Cardiac septum (tissue), 1 donor: ENCODE measurements at regions of chr10 and their contacts with region 1.

Region 1: GRCh38 chr10:35195361-35196306 is 69.0 kb downstream of the CREM start:
- DNase-seq: peak; percentile 78

Region 2: GRCh38 chr10:35103882-35104281 is 91.8 kb before region 1 on chr10:
- intact Hi-C with region 1: no loop called
- DNase-seq: no peak

Region 3: DNA sequence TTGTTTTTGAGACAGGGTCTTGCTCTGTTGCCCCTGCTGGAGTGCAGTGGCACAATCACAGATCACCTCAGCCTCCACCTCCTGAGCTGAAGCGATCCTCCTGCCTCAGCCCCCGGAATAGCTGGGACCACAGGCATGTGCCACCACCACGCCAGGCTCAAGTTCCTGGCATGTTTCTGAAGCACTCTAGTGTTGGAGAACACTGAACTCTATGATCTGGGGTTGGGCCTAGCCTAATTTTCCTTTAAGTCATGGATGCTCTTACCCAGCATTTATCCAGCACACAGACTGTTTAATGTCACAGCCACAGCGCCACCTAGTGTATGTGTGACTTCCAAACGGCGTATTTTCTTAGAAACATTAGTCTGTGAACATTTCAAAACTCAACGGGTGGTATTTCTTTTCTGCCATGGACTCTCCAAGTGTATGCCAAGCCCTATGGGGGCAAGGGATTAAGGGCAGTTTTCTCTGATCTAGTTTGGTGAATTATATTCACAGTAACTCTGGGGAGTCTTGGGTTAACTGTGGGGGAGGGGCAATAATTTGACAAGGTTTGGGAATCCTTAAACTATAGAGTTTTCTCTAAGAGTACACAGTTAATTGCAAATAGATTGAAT is 22.8 kb after region 1 on chr10:
- intact Hi-C with region 1: loop called (anchors 2 kb)
- DNase-seq: peak; percentile 86

Region 4: DNA sequence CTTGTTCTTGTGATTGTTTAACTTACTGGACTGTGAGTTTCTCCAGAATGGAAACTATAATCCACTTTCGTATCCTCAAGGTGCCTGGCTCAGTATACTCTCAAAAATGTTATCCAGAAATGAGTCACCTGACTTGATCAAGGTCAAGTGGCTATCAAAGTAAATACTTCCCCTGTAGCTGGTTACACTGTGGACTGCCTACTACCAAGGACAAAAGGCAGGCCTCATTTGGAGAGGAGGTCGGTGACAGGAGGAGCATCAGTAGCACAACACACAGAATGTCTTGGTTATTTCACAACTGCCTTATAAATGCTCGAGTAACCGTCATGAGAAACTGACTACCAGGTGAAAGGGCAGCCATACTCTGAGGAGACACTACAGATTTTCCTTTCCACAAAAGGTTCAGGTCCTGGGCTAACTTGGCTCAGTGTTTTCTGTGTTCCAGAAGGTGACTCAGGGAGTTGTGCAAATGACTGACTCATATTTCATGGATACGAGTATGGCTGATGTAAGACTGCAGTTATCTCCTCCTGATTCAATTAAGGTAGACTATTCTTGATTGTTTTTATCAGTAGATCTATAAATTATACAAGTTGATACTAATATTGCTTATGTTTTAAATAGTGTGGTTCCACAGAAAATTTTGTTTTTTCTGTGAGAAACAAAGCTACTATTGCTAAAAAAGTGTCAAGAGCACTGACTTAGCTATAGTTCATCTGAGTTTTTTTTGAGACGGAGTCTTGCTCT is 136.4 kb after region 1 on chr10:
- intact Hi-C with region 1: no loop called
- DNase-seq: no peak